HCT116 (cell line): ENCODE measurements at regions of chr9 and their contacts with region 1.

Region 1: DNA sequence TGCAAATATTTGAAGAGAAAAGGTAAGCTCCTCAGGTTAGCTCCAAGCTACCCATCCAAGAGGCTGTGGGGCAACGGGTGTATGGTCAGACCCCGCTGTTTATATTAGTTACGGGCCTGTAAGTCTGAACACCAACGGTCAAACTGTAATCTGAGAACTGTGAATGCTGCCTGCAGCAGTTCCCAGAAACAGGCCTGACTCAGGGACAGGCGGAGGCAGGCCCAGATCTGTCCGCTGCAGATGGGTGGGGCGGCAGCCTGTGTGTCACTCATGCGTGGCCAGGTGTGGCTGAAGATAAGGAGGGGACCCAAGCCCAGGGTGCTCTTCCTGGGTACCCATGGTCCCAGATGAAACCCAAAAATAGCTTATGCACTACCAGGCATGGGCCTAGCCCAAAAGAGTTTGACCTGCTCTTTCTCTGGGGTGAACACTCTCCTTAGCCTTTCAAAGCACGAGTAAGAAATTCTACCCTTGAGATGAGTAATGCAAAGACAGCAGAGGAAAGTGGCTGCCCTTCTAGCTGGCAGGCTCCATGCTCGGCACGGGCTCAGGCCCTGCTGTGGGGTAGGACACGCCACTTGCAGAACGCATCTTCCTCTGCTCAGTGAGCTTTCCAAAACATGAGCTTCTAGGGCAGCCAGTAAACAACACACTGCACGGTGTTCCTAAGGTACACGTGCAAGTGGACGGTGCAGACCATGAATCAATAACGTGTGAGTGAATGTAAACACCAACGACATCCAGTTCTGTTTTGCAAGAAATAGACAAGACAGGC is 9.1 kb downstream of the UBAC1 start:
- DNase-seq: peak; percentile 56
- ATAC-seq: peak; percentile 98
- H3K4me3 ChIP-seq: peak overlapping the region in 1 of 2 experiments; percentile 12; a peak in 1 of 4 replicates
- H3K27ac ChIP-seq: peak overlapping the region; percentile 75
- H3K4me1 ChIP-seq: peaks cover 20% of the 10 kb centered on the region in 2 experiments
- H3K27me3 ChIP-seq: no peaks in the 10 kb centered on the region
- CTCF ChIP-seq: no peak
- POLR2A ChIP-seq: no peak
- RAD21 ChIP-seq: no peak

Region 2: GRCh38 chr9:135864447-135865049 is 87.5 kb before region 1 on chr9:
- CTCF ChIA-PET with region 1: no interaction called
- POLR2A ChIA-PET with region 1: no interaction called
- RAD21 ChIA-PET with region 1: no interaction called
- intact Hi-C with region 1: loop called (anchors 10 kb)
- DNase-seq: peak; percentile 31
- ATAC-seq: peak; percentile 87
- H3K4me3 ChIP-seq: no peak overlapping the region
- H3K27ac ChIP-seq: no peak overlapping the region
- H3K4me1 ChIP-seq: no peaks in the 10 kb centered on the region; a peak in 1 of 4 replicates
- H3K27me3 ChIP-seq: no peaks in the 10 kb centered on the region
- CTCF ChIP-seq: peak; percentile 52 to 94 (median 91)
- POLR2A ChIP-seq: no peak
- RAD21 ChIP-seq: peak; percentile 55

Region 3: DNA sequence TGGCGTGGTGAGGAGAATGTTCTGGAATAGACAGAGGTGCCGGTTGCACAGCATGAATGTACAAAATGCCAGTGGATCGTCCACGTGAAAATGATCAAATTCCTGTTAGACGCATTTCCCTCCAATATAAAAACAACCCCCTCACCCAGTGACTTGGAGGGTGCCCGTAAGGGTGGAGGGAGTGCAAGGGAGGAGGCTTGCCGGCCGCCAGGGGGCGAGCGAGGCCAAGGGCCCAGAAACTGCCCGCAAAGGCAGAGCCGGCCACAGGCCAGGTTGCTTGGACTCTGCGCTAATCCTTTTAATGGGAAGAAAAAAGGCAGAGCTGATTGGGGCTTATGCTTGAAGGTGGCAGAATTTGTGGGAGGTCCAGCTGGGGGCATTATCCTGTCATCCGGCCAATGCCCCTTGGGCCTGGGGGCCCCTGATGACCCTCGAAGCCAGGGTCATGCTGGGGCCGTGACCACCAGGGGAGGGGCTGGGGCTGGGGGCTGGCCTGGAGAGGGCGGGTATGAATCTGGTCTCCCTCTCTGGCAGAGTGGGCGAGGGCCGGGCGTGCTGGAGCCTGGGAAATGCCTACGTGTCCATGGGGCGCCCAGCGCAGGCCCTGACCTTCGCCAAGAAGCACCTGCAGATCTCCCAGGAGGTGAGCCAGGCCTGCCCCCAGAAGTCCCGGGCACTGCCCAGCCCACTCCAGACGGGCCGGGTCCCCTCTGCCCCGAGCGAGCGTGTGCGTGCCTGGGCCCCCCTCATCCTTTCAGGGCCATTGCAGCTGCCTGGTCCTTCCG is 387.3 kb after region 1 on chr9:
- CTCF ChIA-PET with region 1: no interaction called
- POLR2A ChIA-PET with region 1: no interaction called
- RAD21 ChIA-PET with region 1: no interaction called
- intact Hi-C with region 1: no loop called
- DNase-seq: no peak
- ATAC-seq: peak; percentile 87
- H3K4me3 ChIP-seq: no peak overlapping the region
- H3K27ac ChIP-seq: no peak overlapping the region
- H3K4me1 ChIP-seq: peaks cover 6 to 14% of the 10 kb centered on the region in 2 experiments; a peak in 3 of 4 replicates
- H3K27me3 ChIP-seq: no peaks in the 10 kb centered on the region
- CTCF ChIP-seq: peak in 2 of 3 experiments; percentile 99; a peak in 4 of 6 replicates
- POLR2A ChIP-seq: no peak
- RAD21 ChIP-seq: no peak